ENCODE measurements at regions of chr14 and their contacts with region 1.

Region 1: DNA sequence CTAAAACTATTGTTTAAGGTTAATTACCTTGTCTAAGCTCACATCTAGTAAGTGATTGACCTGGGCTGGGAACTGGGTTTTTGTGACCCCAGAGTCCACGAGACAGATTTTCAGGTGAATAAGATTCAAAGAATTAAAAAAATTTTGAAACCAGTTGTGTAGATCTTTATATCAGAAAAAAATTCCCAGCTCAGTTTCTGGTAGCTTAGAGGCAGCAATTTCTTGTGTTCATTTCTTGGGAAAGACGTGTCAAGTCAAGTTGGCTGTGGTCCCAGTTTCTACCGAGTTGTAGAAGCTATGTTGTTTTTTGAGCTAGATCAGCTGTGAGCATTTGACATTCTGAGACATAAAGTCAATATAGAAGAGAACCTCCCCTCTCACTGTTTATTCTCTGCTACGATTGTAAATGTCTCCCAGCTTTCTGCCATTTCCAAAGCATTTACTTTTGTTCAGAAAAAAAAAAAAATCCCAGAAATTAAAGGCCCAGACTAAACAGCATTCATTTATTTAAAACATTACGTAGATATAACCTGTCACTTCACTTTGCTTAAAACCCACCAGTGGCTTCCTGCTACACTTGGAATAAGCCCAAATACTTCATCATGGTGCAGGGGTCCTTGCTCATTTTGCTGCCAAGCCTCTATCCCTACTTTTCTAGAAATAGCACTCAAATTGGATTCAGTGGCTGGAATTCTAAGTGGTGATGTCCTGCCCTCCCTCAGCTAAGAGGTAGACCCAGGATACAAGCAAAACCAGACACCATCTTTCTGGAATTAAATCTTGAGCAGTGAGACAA is 20.5 kb upstream of the PYGL start:
- DNase-seq: peak; percentile 97
- ATAC-seq: peak; percentile 49
- H3K4me3 ChIP-seq: no peak overlapping the region
- H3K27ac ChIP-seq: peak overlapping the region; percentile 31
- H3K4me1 ChIP-seq: peaks cover 35% of the 10 kb centered on the region
- H3K27me3 ChIP-seq: no peaks in the 10 kb centered on the region
- CTCF ChIP-seq: no peak

Region 2: DNA sequence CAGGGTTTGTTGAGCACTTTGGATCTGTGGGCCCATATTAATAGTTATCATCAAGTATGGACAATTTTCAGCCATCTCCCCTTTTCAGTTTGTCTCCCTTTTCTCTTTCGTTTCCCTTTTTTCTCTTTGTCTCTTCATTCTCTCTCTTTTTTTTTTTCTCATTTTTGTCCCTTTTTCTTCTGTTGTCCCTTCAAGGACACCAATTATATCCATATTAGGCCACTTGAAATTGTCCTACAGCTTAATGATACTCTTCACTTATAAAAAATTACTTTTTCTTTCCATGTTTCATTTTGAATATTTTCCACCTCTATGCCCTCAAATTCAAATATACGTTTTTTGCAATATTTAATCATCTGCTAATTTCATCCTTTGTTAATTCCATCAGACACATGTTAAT is 485.8 kb before region 1 on chr14:
- CTCF ChIA-PET with region 1: no interaction called
- POLR2A ChIA-PET with region 1: no interaction called
- intact Hi-C with region 1: no loop called
- DNase-seq: no peak
- ATAC-seq: no peak
- H3K4me3 ChIP-seq: no peak overlapping the region
- H3K27ac ChIP-seq: no peak overlapping the region
- H3K4me1 ChIP-seq: peaks cover 11% of the 10 kb centered on the region; the same call in 1 of the 2 replicates
- H3K27me3 ChIP-seq: no peaks in the 10 kb centered on the region
- CTCF ChIP-seq: no peak

Region 3: DNA sequence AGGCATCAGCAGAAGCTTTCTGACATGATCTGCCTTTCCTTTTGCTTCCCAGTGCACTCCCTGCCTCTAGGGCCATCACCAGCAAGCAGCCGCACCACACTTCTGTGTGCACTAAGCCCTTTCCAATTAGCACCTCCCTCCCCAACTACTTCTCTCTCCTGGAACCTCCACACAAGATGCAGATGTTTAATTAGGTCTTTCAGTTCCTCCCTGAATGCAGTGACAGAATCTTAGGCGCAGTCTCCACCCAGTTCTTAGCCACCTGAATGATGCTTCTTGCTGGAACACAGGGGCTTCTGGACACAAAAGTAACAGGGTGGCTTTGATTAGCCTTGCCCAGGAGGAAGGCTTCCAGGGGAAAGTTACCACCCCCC is 166.8 kb before region 1 on chr14:
- CTCF ChIA-PET with region 1: interaction called, 10 read pairs
- POLR2A ChIA-PET with region 1: no interaction called
- intact Hi-C with region 1: no loop called
- DNase-seq: no peak
- ATAC-seq: no peak
- H3K4me3 ChIP-seq: no peak overlapping the region
- H3K27ac ChIP-seq: no peak overlapping the region
- H3K4me1 ChIP-seq: peaks cover 35% of the 10 kb centered on the region
- H3K27me3 ChIP-seq: no peaks in the 10 kb centered on the region
- CTCF ChIP-seq: no peak

Region 4: DNA sequence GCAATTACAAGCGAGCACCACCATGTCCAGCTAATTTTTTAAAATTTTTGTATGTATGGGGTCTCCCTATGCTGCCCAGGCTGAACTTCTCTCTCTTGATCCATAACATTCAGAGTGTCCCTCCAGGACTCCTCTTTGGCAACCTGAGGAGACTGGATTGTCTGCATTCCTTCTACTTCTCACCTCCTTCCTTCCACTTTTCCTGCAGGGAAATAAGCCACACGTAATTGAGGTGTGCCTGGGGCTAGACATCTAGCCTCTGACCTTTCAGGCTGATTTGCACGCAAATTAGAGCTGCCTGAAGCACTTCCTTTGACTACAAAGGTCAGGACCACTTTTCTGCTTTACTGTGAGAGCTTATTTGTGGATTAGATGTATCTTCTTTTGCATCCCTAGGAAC is 54.2 kb before region 1 on chr14:
- CTCF ChIA-PET with region 1: no interaction called
- POLR2A ChIA-PET with region 1: no interaction called
- intact Hi-C with region 1: no loop called
- DNase-seq: no peak
- ATAC-seq: no peak
- H3K4me3 ChIP-seq: no peak overlapping the region
- H3K27ac ChIP-seq: no peak overlapping the region
- H3K4me1 ChIP-seq: no peaks in the 10 kb centered on the region
- H3K27me3 ChIP-seq: no peaks in the 10 kb centered on the region
- CTCF ChIP-seq: no peak

Region 5: DNA sequence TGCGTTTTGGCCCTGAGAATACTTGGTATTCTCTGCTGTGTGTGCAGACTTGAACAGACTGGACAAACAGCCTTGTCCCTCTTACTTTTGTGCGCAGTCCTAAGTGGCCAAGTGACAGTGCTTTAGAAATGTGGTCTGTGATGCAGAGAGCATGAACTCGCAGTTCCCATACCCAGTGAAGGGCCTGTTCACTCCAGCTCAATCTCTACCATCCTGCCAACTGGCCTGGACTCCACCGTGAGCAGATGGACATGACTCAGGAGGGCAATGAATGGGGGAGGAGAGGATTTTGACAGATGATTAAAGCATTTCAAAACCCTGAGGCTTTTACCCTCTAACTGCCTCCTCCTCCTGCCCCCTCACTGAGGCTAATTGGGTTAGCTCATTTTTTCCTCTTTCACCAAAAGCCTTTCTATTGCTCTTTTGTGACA is 42.0 kb after region 1 on chr14:
- CTCF ChIA-PET with region 1: no interaction called
- POLR2A ChIA-PET with region 1: no interaction called
- intact Hi-C with region 1: loop called (anchors 1 kb)
- DNase-seq: peak; percentile 86
- ATAC-seq: peak; percentile 77
- H3K4me3 ChIP-seq: peak overlapping the region; percentile 6; the same call in 1 of the 2 replicates
- H3K27ac ChIP-seq: peak overlapping the region; percentile 75
- H3K4me1 ChIP-seq: peaks cover 45% of the 10 kb centered on the region
- H3K27me3 ChIP-seq: no peaks in the 10 kb centered on the region
- CTCF ChIP-seq: no peak

Region 6: GRCh38 chr14:51239813-51240803 is 275.3 kb after region 1 on chr14 and contains the start of gene TMX1:
- CTCF ChIA-PET with region 1: no interaction called
- POLR2A ChIA-PET with region 1: interaction called, 16 read pairs
- intact Hi-C with region 1: no loop called
- DNase-seq: peak; percentile 100
- ATAC-seq: peak; percentile 99
- H3K4me3 ChIP-seq: peak within 1 kb of the TSS; percentile 90
- H3K27ac ChIP-seq: peak within 1 kb of the TSS; percentile 7; the same call in 1 of the 2 replicates
- H3K4me1 ChIP-seq: peaks cover 26% of the 10 kb centered on the region
- H3K27me3 ChIP-seq: no peaks in the 10 kb centered on the region
- CTCF ChIP-seq: 0 out of 2 replicates have a peak, but pooled peaks have one; percentile 18
- total RNA-seq, gene TMX1: 56.6 and 61.7 TPM in 2 replicates